CD4-positive, alpha-beta memory T cell (primary cell): ENCODE measurements at regions of chr6 and their contacts with region 1.

Region 1: GRCh38 chr6:118893807-118894424 is at the start of gene ASF1A:
- DNase-seq: peak; percentile 97 to 98 (median 97)
- H3K4me3 ChIP-seq: peak within 1 kb of the TSS; percentile 63 to 86
- H3K4me3 Mint-ChIP-seq: peak within 1 kb of the TSS; percentile 89 to 100 (median 96)
- H3K27ac ChIP-seq: peak within 1 kb of the TSS; percentile 83
- H3K27ac Mint-ChIP-seq: peak within 1 kb of the TSS; percentile 96 to 99 (median 98)
- H3K4me1 ChIP-seq: peaks cover 72% of the 10 kb centered on the region
- H3K4me1 Mint-ChIP-seq: peaks cover 48 to 78% (median 57%) of the 10 kb centered on the region in 4 donors
- H3K27me3 ChIP-seq: no peaks in the 10 kb centered on the region
- H3K27me3 Mint-ChIP-seq: peaks cover 0 to 1% of the 10 kb centered on the region in 2 donors
- total RNA-seq, gene ASF1A: 64.0 to 66.6 TPM

Region 2: GRCh38 chr6:118283766-118284165 is 610.1 kb before region 1 on chr6:
- CTCF ChIA-PET with region 1: no interaction called
- POLR2A ChIA-PET with region 1: no interaction called
- intact Hi-C with region 1: loop called (anchors 5 kb)
- DNase-seq: peak; percentile 48 to 60 (median 56)
- H3K4me3 ChIP-seq: no peak overlapping the region
- H3K4me3 Mint-ChIP-seq: no peak overlapping the region
- H3K27ac ChIP-seq: no peak overlapping the region
- H3K27ac Mint-ChIP-seq: no peak overlapping the region
- H3K4me1 ChIP-seq: peaks cover 3% of the 10 kb centered on the region
- H3K4me1 Mint-ChIP-seq: peaks cover 0 to 1% (median 0%) of the 10 kb centered on the region in 4 donors
- H3K27me3 ChIP-seq: no peaks in the 10 kb centered on the region
- H3K27me3 Mint-ChIP-seq: peaks cover 5 to 7% of the 10 kb centered on the region in 2 donors

Region 3: DNA sequence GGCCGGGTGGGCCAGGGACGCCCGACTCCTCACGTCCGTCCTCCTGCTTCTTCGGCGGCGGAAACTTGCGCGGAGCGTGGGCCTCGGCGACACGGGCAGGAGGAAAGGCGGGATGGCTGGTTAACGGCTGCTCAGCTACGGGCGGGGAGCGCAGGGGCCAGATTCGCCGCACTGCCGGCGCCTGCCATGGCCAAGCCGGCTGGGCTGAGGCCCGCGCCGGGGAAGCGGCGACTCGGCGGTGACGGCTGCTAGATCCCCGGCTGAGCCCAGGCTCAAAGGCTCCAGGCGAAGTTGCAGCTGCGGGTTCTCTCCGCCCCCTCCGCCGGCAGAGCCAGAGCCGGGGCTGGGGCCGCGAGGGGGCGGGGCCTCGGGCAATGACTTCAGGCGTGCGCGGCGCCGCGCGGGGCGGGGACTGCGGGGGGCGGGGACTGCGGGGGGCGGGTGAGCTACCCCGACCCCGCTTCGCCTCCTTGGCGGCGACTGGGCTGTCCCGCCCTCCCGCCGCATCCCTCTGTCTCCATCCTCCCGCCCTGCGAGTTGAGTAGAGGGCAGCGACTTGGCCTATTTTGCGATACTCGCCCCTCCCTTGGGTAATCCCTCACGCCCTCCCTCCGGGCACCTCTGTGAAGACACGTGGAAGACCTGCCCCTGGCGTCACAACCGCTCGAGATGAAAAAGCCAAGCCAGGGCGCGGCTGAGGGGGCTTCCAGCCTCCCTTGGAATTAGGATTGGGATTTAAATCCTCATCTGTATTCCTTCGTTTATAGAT is 242.4 kb before region 1 on chr6 and contains the start of gene CEP85L:
- CTCF ChIA-PET with region 1: no interaction called
- POLR2A ChIA-PET with region 1: interaction called, 13 read pairs
- intact Hi-C with region 1: loop called (anchors 2 kb)
- DNase-seq: peak; percentile 88 to 92 (median 90)
- H3K4me3 ChIP-seq: peak within 1 kb of the TSS; percentile 37 to 75
- H3K4me3 Mint-ChIP-seq: peak within 1 kb of the TSS; percentile 90 to 99 (median 94)
- H3K27ac ChIP-seq: peak within 1 kb of the TSS; percentile 91
- H3K27ac Mint-ChIP-seq: peak within 1 kb of the TSS; percentile 87 to 99 (median 97)
- H3K4me1 ChIP-seq: peaks cover 50% of the 10 kb centered on the region
- H3K4me1 Mint-ChIP-seq: peaks cover 39 to 62% (median 50%) of the 10 kb centered on the region in 4 donors
- H3K27me3 ChIP-seq: no peaks in the 10 kb centered on the region
- H3K27me3 Mint-ChIP-seq: no peaks in the 10 kb centered on the region
- total RNA-seq, gene CEP85L: 64.9 to 71.1 TPM

Region 4: GRCh38 chr6:118810420-118811027 is 83.4 kb before region 1 on chr6:
- CTCF ChIA-PET with region 1: interaction called, 41 read pairs
- POLR2A ChIA-PET with region 1: interaction called, 105 read pairs
- intact Hi-C with region 1: loop called (anchors 1 kb)
- DNase-seq: peak; percentile 74 to 89 (median 84)
- H3K4me3 ChIP-seq: peak overlapping the region in 1 of 2 donors; percentile 12
- H3K4me3 Mint-ChIP-seq: peak overlapping the region; percentile 62 to 91 (median 82)
- H3K27ac ChIP-seq: peak overlapping the region; percentile 49
- H3K27ac Mint-ChIP-seq: peak overlapping the region; percentile 87 to 99 (median 96)
- H3K4me1 ChIP-seq: peaks cover 47% of the 10 kb centered on the region
- H3K4me1 Mint-ChIP-seq: peaks cover 46 to 77% (median 51%) of the 10 kb centered on the region in 4 donors
- H3K27me3 ChIP-seq: no peaks in the 10 kb centered on the region
- H3K27me3 Mint-ChIP-seq: no peaks in the 10 kb centered on the region

Region 5: GRCh38 chr6:118908441-118908840 is 14.5 kb after region 1 on chr6:
- CTCF ChIA-PET with region 1: interaction called, 15 read pairs
- POLR2A ChIA-PET with region 1: interaction called, 28 read pairs
- intact Hi-C with region 1: loop called (anchors 1 kb)
- DNase-seq: no peak
- H3K4me3 ChIP-seq: no peak overlapping the region
- H3K4me3 Mint-ChIP-seq: no peak overlapping the region
- H3K27ac ChIP-seq: no peak overlapping the region
- H3K27ac Mint-ChIP-seq: no peak overlapping the region
- H3K4me1 ChIP-seq: peaks cover 30% of the 10 kb centered on the region
- H3K4me1 Mint-ChIP-seq: peaks cover 26 to 43% (median 33%) of the 10 kb centered on the region in 4 donors
- H3K27me3 ChIP-seq: no peaks in the 10 kb centered on the region
- H3K27me3 Mint-ChIP-seq: no peaks in the 10 kb centered on the region

Region 6: DNA sequence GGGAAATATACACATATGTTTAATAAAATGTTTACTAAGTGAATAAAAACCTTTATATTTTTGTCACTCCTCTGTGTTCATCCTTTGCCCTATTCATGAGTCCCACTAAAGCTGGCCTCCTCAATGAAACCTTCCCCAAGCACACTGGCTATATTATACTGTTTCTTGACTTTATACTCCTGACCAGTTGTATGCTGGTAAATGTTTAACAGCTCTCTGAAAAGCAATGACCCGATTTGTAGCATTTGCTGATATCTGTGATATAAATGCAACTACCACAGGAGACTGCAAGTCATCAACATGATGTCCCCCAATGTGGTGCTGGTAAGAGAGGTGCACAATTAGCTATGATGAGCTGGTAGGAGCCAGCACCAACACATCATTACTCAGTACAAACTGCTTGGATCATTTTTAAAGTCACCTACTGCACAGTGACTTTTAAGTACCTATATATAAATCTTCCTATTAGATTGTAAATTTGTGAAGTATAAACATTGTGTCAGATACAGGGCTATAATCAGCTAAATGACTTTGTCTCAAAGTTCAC is 105.7 kb after region 1 on chr6:
- CTCF ChIA-PET with region 1: no interaction called
- POLR2A ChIA-PET with region 1: no interaction called
- intact Hi-C with region 1: no loop called
- DNase-seq: no peak
- H3K4me3 ChIP-seq: no peak overlapping the region
- H3K4me3 Mint-ChIP-seq: no peak overlapping the region
- H3K27ac ChIP-seq: no peak overlapping the region
- H3K27ac Mint-ChIP-seq: no peak overlapping the region
- H3K4me1 ChIP-seq: no peaks in the 10 kb centered on the region
- H3K4me1 Mint-ChIP-seq: peaks cover 0 to 10% (median 5%) of the 10 kb centered on the region in 4 donors
- H3K27me3 ChIP-seq: no peaks in the 10 kb centered on the region
- H3K27me3 Mint-ChIP-seq: no peaks in the 10 kb centered on the region

Region 7: GRCh38 chr6:119110601-119111548 is 217.0 kb after region 1 on chr6:
- CTCF ChIA-PET with region 1: interaction called, 5 read pairs
- POLR2A ChIA-PET with region 1: interaction called, 5 read pairs
- intact Hi-C with region 1: loop called (anchors 1 kb)
- DNase-seq: peak; percentile 46 to 67 (median 65)
- H3K4me3 ChIP-seq: no peak overlapping the region
- H3K4me3 Mint-ChIP-seq: peak overlapping the region in 2 of 8 donors; percentile 13 to 27
- H3K27ac ChIP-seq: no peak overlapping the region
- H3K27ac Mint-ChIP-seq: no peak overlapping the region
- H3K4me1 ChIP-seq: no peaks in the 10 kb centered on the region
- H3K4me1 Mint-ChIP-seq: peaks cover 7 to 12% (median 9%) of the 10 kb centered on the region in 4 donors
- H3K27me3 ChIP-seq: no peaks in the 10 kb centered on the region
- H3K27me3 Mint-ChIP-seq: peaks cover 0 to 1% of the 10 kb centered on the region in 2 donors